Gastrocnemius medialis (tissue), 4 donors: ENCODE measurements at regions of chr22 and their contacts with region 1.

Region 1: GRCh38 chr22:20130739-20131596 is 636 bp upstream of the ZDHHC8 start:
- DNase-seq: peak; percentile 81 to 87
- ATAC-seq: peak; percentile 81 to 83
- H3K4me3 ChIP-seq: peak overlapping the region; percentile 78 to 100 (median 95)
- H3K27ac ChIP-seq: peak overlapping the region; percentile 94 to 99 (median 98)
- H3K4me1 ChIP-seq: peaks cover 25 to 50% of the 10 kb centered on the region in 2 donors
- H3K27me3 ChIP-seq: no peaks in the 10 kb centered on the region
- CTCF ChIP-seq: no peak
- POLR2A ChIP-seq: peak in 1 of 2 donors; percentile 22

Region 2: GRCh38 chr22:19970479-19971275 is 160.3 kb before region 1 on chr22:
- in situ Hi-C with region 1: no loop called
- intact Hi-C with region 1: loop called (anchors 5 kb)
- DNase-seq: peak; percentile 35 to 55
- ATAC-seq: peak; percentile 73 to 75
- H3K4me3 ChIP-seq: no peak overlapping the region
- H3K27ac ChIP-seq: peak overlapping the region in 3 of 4 donors; percentile 8 to 64 (median 64)
- H3K4me1 ChIP-seq: peaks cover 0 to 8% of the 10 kb centered on the region in 2 donors
- H3K27me3 ChIP-seq: no peaks in the 10 kb centered on the region
- CTCF ChIP-seq: peak; percentile 85 to 99 (median 94)
- POLR2A ChIP-seq: no peak

Region 3: DNA sequence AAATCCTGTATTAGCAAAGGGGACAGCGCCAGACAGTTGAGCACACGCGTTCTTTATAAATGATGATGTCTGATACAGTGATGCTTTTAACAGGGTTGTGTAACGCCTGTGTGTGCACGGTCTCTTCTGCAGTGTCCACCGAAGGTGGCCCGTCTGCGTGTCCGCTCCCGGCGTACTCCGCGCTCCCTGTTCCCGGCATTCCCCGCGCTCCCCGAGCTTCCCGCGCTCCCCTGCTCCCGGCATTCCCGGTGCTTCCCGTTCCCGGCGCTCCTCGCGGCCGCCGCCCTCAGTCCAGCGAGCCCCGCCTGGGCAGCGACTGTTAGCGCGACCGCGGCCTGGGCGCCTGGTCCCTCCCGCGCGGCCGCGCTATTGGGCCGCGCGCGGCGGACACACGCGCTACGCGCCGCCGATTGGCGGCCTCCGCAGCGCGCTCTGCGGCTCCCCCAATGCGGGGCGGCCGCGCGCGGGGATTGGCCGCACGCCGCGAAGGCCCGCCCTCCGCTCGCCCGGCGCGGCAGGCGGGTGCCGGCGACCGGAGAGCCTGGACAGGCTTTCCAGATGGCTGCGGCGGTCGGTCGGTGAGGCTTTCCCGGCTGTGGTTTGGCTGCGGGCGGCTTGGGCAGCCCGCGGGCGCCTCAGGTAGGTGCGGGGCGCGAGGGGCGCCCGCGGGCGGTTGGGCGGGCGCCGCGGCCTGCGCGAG is 51.1 kb before region 1 on chr22 and contains the start of gene DGCR8:
- in situ Hi-C with region 1: no loop called
- intact Hi-C with region 1: loop called (anchors 1 kb)
- DNase-seq: peak; percentile 90 to 94
- ATAC-seq: peak; percentile 84 to 86
- H3K4me3 ChIP-seq: peak within 1 kb of the TSS; percentile 61 to 87 (median 75)
- H3K27ac ChIP-seq: peak within 1 kb of the TSS; percentile 83 to 96 (median 86)
- H3K4me1 ChIP-seq: peaks cover 43 to 50% of the 10 kb centered on the region in 2 donors
- H3K27me3 ChIP-seq: no peaks in the 10 kb centered on the region
- CTCF ChIP-seq: peak in 1 of 5 experiments; percentile 6
- POLR2A ChIP-seq: peak; percentile 62 to 65
- total RNA-seq, gene DGCR8: 5.2 to 16.5 (median 11.2) TPM

Region 4: DNA sequence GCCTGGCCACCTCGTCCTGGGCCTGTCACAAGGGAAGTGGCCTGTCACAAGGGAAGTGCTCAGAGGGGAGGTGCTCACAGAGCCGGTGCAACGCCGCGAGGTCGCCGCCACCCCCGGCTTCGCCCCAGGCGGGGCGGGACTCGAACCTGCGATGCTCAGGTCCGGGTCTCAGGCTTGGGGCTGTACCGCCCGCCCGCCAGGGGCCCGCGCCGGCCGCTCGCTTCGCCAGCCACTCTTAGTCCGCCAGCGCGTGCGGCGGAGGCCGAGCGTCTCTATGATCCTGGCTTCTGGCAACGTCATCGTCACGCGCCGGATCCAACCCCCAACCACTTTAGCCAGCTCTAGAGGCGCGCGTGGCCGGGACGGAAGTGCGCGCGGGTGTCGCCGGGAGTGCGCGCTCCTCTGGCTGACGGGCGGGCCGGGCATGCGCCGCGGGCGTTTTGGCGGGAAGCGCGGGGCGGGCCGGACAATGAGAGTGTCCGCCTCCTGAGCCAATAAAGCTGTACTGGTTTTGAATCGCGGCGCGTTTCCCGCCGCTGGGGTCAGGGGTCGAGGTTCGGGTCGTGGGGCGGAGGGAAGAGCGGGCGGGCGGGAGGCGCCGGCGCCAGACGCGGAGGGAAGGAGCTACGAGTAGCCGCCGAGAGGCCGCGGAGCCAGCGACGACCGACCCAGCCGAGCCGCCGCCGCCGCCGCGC is 13.9 kb before region 1 on chr22 and contains the start of gene TRMT2A:
- in situ Hi-C with region 1: no loop called
- intact Hi-C with region 1: loop called (anchors 1 kb)
- DNase-seq: peak; percentile 94 to 98
- ATAC-seq: peak; percentile 90 to 93
- H3K4me3 ChIP-seq: peak within 1 kb of the TSS; percentile 79 to 97 (median 86)
- H3K27ac ChIP-seq: peak within 1 kb of the TSS; percentile 94 to 99 (median 96)
- H3K4me1 ChIP-seq: peaks cover 28 to 34% of the 10 kb centered on the region in 2 donors
- H3K27me3 ChIP-seq: no peaks in the 10 kb centered on the region
- CTCF ChIP-seq: peak in 2 of 5 experiments; percentile 9 to 10
- POLR2A ChIP-seq: peak; percentile 76 to 79
- total RNA-seq, gene TRMT2A: 16.9 to 38.0 (median 28.2) TPM